Aorta (tissue), 5 donors: ENCODE measurements at regions of chr3 and their contacts with region 1.

Region 1: DNA sequence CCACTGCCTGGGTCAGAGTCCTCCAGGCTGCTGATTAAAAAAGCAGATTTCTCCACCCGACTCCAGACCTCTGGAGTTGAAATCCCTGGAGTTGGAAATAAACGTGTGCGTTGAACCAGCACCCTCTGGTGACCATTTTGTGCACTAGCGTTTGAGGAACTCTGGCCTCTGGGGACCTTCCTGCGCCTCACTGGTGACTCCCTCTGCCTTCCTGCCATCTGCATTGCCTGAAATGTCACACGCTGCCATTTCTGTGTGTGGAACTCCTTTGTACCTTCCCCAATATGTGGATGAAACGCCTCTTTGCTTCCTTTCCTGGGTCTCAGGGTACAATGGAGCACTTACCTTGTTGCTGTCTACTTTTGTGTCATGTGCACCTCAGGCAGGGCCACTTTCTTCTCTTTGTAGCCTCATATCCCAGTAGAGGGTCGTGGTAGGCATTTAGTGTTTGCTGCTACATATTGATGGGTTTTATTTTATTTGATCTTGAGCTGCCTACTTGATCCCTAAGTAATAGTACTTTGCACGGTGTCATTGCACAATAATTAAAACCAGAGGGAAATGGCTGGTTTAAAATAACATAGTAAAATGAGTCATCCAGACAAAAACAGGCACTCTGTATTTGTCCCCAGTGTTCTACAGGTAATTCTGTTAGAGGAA is 56.8 kb downstream of the GPR171 start:
- DNase-seq: peak; percentile 76 to 81
- ATAC-seq: peak; percentile 92
- H3K4me3 ChIP-seq: no peak overlapping the region
- H3K27ac ChIP-seq: no peak overlapping the region
- H3K4me1 ChIP-seq: no peaks in the 10 kb centered on the region
- H3K27me3 ChIP-seq: no peaks in the 10 kb centered on the region

Region 2: GRCh38 chr3:150787741-150788370 is 358.3 kb before region 1 on chr3:
- intact Hi-C with region 1: loop called (anchors 2 to 5 kb)
- DNase-seq: peak; percentile 92 to 97
- ATAC-seq: peak; percentile 86
- H3K4me3 ChIP-seq: no peak overlapping the region
- H3K27ac ChIP-seq: no peak overlapping the region
- H3K4me1 ChIP-seq: no peaks in the 10 kb centered on the region
- H3K27me3 ChIP-seq: no peaks in the 10 kb centered on the region

Region 3: GRCh38 chr3:151003029-151003763 is 143.0 kb before region 1 on chr3:
- intact Hi-C with region 1: no loop called
- DNase-seq: no peak
- ATAC-seq: no peak
- H3K4me3 ChIP-seq: no peak overlapping the region
- H3K27ac ChIP-seq: no peak overlapping the region
- H3K4me1 ChIP-seq: no peaks in the 10 kb centered on the region
- H3K27me3 ChIP-seq: no peaks in the 10 kb centered on the region